Mammary epithelial cell (primary cell): ENCODE measurements at regions of chr3 and their contacts with region 1.

Region 1: GRCh38 chr3:51719410-51720025 is 12.7 kb downstream of the GRM2 start:
- DNase-seq: no peak
- H3K4me3 ChIP-seq: no peak overlapping the region
- H3K27ac ChIP-seq: no peak overlapping the region
- H3K4me1 ChIP-seq: no peaks in the 10 kb centered on the region
- H3K27me3 ChIP-seq: no peaks in the 10 kb centered on the region
- CTCF ChIP-seq: no peak

Region 2: DNA sequence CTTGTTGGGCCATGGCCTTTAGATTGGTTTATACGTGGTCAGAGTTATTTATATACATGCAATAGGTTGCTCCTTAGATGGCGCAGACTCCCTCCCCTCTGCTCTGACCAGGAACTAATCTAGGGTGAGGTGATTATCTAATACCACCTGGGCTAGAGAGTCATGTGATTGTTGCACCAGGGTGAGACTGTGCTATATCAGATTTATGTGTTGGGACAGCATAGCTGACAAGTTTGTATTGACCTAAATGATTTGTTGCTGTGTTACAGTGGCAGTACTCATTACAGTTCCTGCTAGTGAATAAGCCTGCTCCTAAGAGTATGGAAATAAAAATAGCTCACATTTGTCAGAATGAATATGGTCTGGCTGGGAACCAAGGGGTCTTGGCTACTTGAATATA is 66.7 kb after region 1 on chr3:
- CTCF ChIA-PET with region 1: no interaction called
- dilution Hi-C with region 1: no loop called
- in situ Hi-C with region 1: loop called (anchors 5 to 10 kb)
- intact Hi-C with region 1: no loop called
- DNase-seq: no peak
- H3K4me3 ChIP-seq: no peak overlapping the region
- H3K27ac ChIP-seq: no peak overlapping the region
- H3K4me1 ChIP-seq: no peaks in the 10 kb centered on the region
- H3K27me3 ChIP-seq: no peaks in the 10 kb centered on the region
- CTCF ChIP-seq: no peak

Region 3: DNA sequence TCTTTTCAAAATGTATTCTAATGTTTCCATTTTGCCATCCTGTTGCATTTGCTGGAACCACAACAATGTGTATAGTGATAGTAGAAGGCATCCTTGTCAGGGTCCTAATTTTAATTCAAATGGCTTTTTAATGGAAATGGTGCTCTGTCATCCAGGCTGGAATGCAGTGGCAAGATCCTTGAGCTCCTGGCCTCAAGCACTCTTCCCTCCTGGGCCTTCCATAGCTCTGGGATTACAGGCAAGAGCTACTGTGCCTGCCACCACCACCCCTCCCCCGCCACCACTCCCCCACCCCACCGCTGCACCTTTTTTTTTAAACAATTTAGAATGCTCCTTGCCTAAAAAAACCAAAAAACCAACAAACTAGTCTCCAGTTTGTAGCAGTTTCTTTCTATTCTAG is 74.7 kb after region 1 on chr3:
- CTCF ChIA-PET with region 1: interaction called, 4 read pairs
- dilution Hi-C with region 1: no loop called
- in situ Hi-C with region 1: loop called (anchors 5 to 10 kb)
- intact Hi-C with region 1: no loop called
- DNase-seq: no peak
- H3K4me3 ChIP-seq: no peak overlapping the region
- H3K27ac ChIP-seq: no peak overlapping the region
- H3K4me1 ChIP-seq: peaks cover 10% of the 10 kb centered on the region
- H3K27me3 ChIP-seq: no peaks in the 10 kb centered on the region
- CTCF ChIP-seq: no peak

Region 4: DNA sequence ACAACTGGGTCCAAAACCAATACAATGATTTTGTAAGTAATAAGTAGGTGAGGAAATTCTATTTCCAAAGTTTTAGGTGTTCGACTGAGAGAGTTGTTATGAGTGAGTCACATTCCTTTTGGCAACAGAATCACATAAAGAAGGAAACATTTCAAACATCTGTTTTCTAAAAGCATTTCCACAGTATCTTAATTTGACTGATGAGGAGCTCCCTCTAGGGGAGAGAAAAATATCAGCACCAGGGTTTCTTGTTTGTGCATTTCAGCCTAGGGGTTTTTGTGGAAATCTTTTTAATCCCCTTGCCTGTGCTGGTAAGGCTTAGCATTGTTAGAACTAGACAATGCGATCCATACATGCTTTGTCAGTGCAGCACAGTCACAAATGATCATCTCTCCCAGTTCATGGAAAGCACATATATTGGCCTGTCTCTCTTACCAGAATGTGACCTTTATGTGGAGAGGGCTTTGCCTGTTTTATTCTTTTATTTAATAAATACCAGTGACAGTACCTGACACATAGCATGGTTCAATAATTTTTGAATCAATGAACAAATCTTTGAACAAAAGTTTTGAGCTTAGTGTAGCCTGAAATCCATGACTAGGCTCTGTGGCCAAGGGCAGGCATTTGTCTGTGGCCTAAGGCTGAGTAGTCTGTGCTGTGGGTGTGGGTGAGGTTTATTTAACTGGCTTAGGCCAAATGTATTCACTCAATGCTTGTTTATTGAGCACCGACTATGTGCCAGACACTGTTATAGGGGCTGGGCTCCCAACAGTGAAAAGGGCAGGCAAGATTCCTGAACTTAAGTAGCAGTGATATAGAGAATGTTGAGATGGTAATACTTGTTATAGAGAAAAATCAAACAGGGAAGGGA is 80.6 kb after region 1 on chr3:
- CTCF ChIA-PET with region 1: interaction called, 5 read pairs
- dilution Hi-C with region 1: no loop called
- in situ Hi-C with region 1: no loop called
- intact Hi-C with region 1: loop called (anchors 1 kb)
- DNase-seq: peak; percentile 65
- H3K4me3 ChIP-seq: no peak overlapping the region
- H3K27ac ChIP-seq: no peak overlapping the region
- H3K4me1 ChIP-seq: peaks cover 10% of the 10 kb centered on the region
- H3K27me3 ChIP-seq: no peaks in the 10 kb centered on the region
- CTCF ChIP-seq: peak; percentile 80 to 90